ENCODE measurements at regions of chr2 and their contacts with region 1.

Region 1: DNA sequence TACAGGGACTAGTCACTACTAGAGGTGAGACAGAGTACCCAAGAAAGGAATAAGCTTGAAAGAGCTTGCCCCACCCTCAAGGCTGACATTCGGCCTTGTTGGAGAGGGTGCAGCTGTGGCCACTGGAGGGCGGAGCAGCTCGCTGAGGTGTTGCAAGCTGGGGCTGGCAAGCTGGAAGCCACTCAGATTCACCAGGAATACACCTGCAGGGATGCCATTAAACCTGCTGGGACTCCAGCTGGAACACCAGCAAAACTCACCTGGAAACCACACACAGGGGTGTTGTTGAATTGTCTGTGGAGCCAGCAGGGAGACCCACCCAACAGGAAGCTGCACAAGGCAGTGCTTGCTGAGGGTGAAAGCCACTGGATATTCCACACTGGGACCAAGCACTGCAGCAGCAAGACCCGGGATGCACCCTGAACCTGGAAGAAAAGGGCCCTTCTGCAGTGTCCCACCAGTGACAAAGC is 26.1 kb downstream of the KCTD18 start:
- DNase-seq: no peak
- H3K4me3 ChIP-seq: no peak overlapping the region
- H3K27me3 ChIP-seq: no peaks in the 10 kb centered on the region
- CTCF ChIP-seq: peak; percentile 49

Region 2: DNA sequence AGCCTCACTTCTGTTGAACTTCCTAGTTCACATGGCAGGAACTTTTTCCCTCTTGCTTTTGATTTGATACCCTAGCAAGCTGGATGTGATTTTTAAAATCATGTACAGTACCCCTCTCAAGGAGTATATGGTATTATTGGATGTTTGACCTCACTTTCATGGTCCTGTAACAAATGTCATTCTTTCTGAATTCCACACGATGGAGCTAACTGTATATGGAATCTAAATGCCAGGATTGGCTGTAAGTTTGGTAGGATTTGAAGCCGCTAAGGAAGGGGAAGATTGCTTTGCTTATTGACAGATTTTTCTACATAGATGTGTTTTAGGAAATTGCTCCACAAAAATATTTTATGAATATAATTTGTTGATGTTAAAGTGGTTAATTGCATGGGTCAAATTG is 510.1 kb before region 1 on chr2:
- CTCF ChIA-PET with region 1: interaction called, 62 read pairs
- POLR2A ChIA-PET with region 1: no interaction called
- DNase-seq: no peak
- H3K4me3 ChIP-seq: no peak overlapping the region
- H3K27me3 ChIP-seq: no peaks in the 10 kb centered on the region
- CTCF ChIP-seq: peak; percentile 53

Region 3: GRCh38 chr2:199985625-199986207 is 498.0 kb before region 1 on chr2:
- CTCF ChIA-PET with region 1: interaction called, 41 read pairs
- POLR2A ChIA-PET with region 1: no interaction called
- DNase-seq: no peak
- H3K4me3 ChIP-seq: no peak overlapping the region
- H3K27me3 ChIP-seq: no peaks in the 10 kb centered on the region
- CTCF ChIP-seq: peak; percentile 80

Region 4: GRCh38 chr2:200471324-200471848 is 12.4 kb before region 1 on chr2:
- CTCF ChIA-PET with region 1: interaction called, 10 read pairs
- POLR2A ChIA-PET with region 1: no interaction called
- DNase-seq: no peak
- H3K4me3 ChIP-seq: no peak overlapping the region
- H3K27me3 ChIP-seq: no peaks in the 10 kb centered on the region
- CTCF ChIP-seq: peak; percentile 52

Region 5: GRCh38 chr2:200509612-200510433 is 26.1 kb after region 1 on chr2 and contains the start of gene KCTD18:
- CTCF ChIA-PET with region 1: interaction called, 10 read pairs
- POLR2A ChIA-PET with region 1: no interaction called
- DNase-seq: peak; percentile 26
- H3K4me3 ChIP-seq: peak within 1 kb of the TSS; percentile 77
- H3K27me3 ChIP-seq: peaks cover 10% of the 10 kb centered on the region
- CTCF ChIP-seq: peak; percentile 55
- polyA plus RNA-seq, gene KCTD18: 9.3 and 11.3 TPM in 2 replicates